ENCODE measurements at regions of chr17 and their contacts with region 1.

Region 1: DNA sequence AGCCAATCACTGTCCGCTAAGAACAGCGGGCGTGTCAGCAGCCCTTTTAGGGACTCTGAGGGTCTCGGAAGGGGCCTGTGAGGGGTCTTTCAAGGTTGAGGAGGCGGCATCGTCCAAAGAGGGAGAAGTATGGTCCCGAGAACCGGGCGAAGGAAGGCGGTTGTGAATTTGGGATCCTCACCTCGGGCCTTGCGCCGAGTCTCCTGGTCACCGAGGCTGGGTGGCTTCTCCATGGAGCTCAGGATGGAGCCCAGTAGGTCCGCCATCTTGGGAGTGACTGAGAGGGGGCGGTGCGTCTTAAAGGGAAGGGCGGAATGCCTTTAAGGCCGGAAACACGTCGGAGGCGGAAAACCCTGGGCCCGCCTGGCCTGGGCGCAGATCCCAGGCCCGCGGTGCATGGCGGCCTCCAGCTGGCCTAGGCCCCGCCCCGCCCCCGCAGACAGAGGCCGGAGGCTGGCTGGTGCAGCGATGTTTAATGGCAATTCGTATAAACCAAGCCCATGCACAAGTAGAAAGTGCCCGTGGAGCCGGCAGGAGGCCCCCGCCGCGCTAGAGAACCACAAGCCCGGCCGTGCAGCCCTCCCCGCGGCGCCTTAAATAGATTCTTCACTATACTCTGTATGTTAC is at the start of gene SPAG7:
- DNase-seq: peak; percentile 88 to 98 (median 93)
- ATAC-seq: peak; percentile 71
- H3K4me3 ChIP-seq: peak within 1 kb of the TSS; percentile 84
- H3K4me3 Mint-ChIP-seq: no peak within 1 kb of the TSS
- H3K27ac ChIP-seq: peak within 1 kb of the TSS; percentile 87
- H3K27ac Mint-ChIP-seq: peak within 1 kb of the TSS; percentile 69
- H3K4me1 ChIP-seq: peaks cover 38% of the 10 kb centered on the region
- H3K4me1 Mint-ChIP-seq: peaks cover 13% of the 10 kb centered on the region
- H3K27me3 ChIP-seq: no peaks in the 10 kb centered on the region
- H3K27me3 Mint-ChIP-seq: no peaks in the 10 kb centered on the region
- CTCF ChIP-seq: peak; percentile 15
- total RNA-seq, gene SPAG7: 30.2 to 30.9 TPM

Region 2: GRCh38 chr17:4366327-4367063 is 601.2 kb before region 1 on chr17 and contains the start of gene UBE2G1:
- CTCF ChIA-PET with region 1: no interaction called
- POLR2A ChIA-PET with region 1: no interaction called
- intact Hi-C with region 1: loop called in 1 of 2 experiments (anchors 10 kb)
- DNase-seq: peak; percentile 97 to 100 (median 99)
- ATAC-seq: peak; percentile 82
- H3K4me3 ChIP-seq: peak within 1 kb of the TSS; percentile 54
- H3K4me3 Mint-ChIP-seq: peak within 1 kb of the TSS; percentile 90
- H3K27ac ChIP-seq: peak within 1 kb of the TSS; percentile 68 to 91
- H3K27ac Mint-ChIP-seq: peak within 1 kb of the TSS; percentile 89
- H3K4me1 ChIP-seq: peaks cover 41% of the 10 kb centered on the region
- H3K4me1 Mint-ChIP-seq: peaks cover 31% of the 10 kb centered on the region
- H3K27me3 ChIP-seq: no peaks in the 10 kb centered on the region
- H3K27me3 Mint-ChIP-seq: no peaks in the 10 kb centered on the region
- CTCF ChIP-seq: no peak
- total RNA-seq, gene UBE2G1: 58.5 to 58.8 TPM

Region 3: DNA sequence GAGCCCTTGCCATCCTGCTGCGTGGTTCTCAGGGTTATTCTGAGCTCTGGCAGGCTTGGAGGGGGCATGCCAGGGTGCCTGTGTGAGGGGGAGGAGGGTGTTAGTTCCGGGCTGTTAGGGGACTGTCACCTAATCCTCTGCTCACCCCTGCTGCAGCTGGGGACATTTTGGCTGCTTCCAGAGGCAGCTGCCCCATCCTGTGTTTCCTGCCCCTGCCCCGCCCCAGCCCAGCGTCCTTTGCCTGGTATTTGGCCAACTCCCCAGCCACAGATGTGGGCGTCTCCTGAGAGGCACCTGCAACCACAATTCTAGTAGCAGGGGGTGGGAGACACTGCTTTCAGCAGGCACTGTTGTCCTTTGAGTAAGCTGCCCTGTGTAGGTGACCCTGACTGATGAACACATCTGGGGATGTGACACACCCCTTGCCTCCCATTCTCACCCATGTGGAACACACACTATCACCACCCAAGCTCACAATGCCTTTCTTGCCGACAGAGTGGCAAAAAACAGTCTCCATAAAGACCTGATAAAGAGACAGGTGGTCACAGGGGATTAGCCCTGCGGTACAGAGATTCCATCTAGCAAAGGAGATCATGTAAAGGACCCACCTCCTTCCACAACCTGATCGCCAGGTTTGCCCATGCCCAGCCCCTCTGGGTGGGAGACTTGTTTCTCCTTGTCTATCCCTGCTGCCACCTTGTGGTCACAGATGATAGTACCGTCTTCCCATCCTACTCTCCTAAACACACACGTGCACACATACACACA is 64.4 kb before region 1 on chr17 and contains the start of gene CHRNE:
- CTCF ChIA-PET with region 1: interaction called, 7 read pairs
- POLR2A ChIA-PET with region 1: interaction called, 54 read pairs
- intact Hi-C with region 1: loop called in 1 of 2 experiments (anchors 1 kb)
- DNase-seq: peak; percentile 55 to 91 (median 70)
- ATAC-seq: peak; percentile 33
- H3K4me3 ChIP-seq: no peak within 1 kb of the TSS
- H3K4me3 Mint-ChIP-seq: peak within 1 kb of the TSS; percentile 76
- H3K27ac ChIP-seq: no peak within 1 kb of the TSS
- H3K27ac Mint-ChIP-seq: peak within 1 kb of the TSS; percentile 94
- H3K4me1 ChIP-seq: peaks cover 54% of the 10 kb centered on the region
- H3K4me1 Mint-ChIP-seq: peaks cover 35% of the 10 kb centered on the region
- H3K27me3 ChIP-seq: no peaks in the 10 kb centered on the region
- H3K27me3 Mint-ChIP-seq: peaks cover 10% of the 10 kb centered on the region
- CTCF ChIP-seq: peak; percentile 89
- total RNA-seq, gene CHRNE: 3.2 to 3.7 TPM

Region 4: GRCh38 chr17:4934173-4934979 is 33.3 kb before region 1 on chr17:
- CTCF ChIA-PET with region 1: interaction called, 14 read pairs
- POLR2A ChIA-PET with region 1: interaction called, 195 read pairs
- intact Hi-C with region 1: no loop called
- DNase-seq: peak in 3 of 14 experiments; percentile 20 to 57 (median 30)
- ATAC-seq: no peak
- H3K4me3 ChIP-seq: no peak overlapping the region
- H3K4me3 Mint-ChIP-seq: no peak overlapping the region
- H3K27ac ChIP-seq: no peak overlapping the region
- H3K27ac Mint-ChIP-seq: peak overlapping the region; percentile 46
- H3K4me1 ChIP-seq: peaks cover 33% of the 10 kb centered on the region
- H3K4me1 Mint-ChIP-seq: peaks cover 29% of the 10 kb centered on the region
- H3K27me3 ChIP-seq: no peaks in the 10 kb centered on the region
- H3K27me3 Mint-ChIP-seq: no peaks in the 10 kb centered on the region
- CTCF ChIP-seq: no peak

Region 5: DNA sequence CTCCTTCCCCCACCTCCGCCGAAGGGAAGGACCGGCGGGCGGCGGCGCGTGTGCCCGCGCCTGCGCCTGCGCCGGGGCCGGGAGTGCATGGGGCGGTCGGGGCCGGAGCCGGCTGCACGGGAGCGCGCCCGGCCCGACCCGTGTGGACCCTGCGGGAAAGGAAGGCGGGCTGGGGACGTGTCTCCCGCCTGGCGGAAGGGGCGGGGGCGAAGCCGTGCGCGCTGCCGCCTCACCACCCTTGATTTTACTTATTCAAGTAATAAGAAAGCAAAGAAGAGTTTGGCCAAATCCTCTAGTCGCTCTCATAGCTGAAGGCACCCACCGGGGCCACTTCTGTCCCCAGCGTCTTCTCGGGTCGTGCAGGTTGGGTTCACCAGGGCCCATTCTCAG is 18.7 kb before region 1 on chr17:
- CTCF ChIA-PET with region 1: interaction called, 7 read pairs
- POLR2A ChIA-PET with region 1: interaction called, 350 read pairs
- intact Hi-C with region 1: loop called (anchors 1 kb)
- DNase-seq: peak in 13 of 14 experiments; percentile 36 to 89 (median 66)
- ATAC-seq: peak; percentile 32
- H3K4me3 ChIP-seq: peak overlapping the region; percentile 99
- H3K4me3 Mint-ChIP-seq: peak overlapping the region; percentile 99
- H3K27ac ChIP-seq: peak overlapping the region; percentile 84 to 98
- H3K27ac Mint-ChIP-seq: peak overlapping the region; percentile 90
- H3K4me1 ChIP-seq: peaks cover 45% of the 10 kb centered on the region
- H3K4me1 Mint-ChIP-seq: peaks cover 51% of the 10 kb centered on the region
- H3K27me3 ChIP-seq: no peaks in the 10 kb centered on the region
- H3K27me3 Mint-ChIP-seq: no peaks in the 10 kb centered on the region
- CTCF ChIP-seq: no peak

Region 6: GRCh38 chr17:4980644-4981216 is 13.1 kb after region 1 on chr17:
- CTCF ChIA-PET with region 1: interaction called, 3 read pairs
- POLR2A ChIA-PET with region 1: interaction called, 50 read pairs
- intact Hi-C with region 1: no loop called
- DNase-seq: peak in 8 of 14 experiments; percentile 21 to 83 (median 56)
- ATAC-seq: peak; percentile 96
- H3K4me3 ChIP-seq: no peak overlapping the region
- H3K4me3 Mint-ChIP-seq: peak overlapping the region; percentile 47
- H3K27ac ChIP-seq: no peak overlapping the region
- H3K27ac Mint-ChIP-seq: peak overlapping the region; percentile 16
- H3K4me1 ChIP-seq: peaks cover 24% of the 10 kb centered on the region
- H3K4me1 Mint-ChIP-seq: peaks cover 20% of the 10 kb centered on the region
- H3K27me3 ChIP-seq: no peaks in the 10 kb centered on the region
- H3K27me3 Mint-ChIP-seq: no peaks in the 10 kb centered on the region
- CTCF ChIP-seq: peak; percentile 80

Region 7: DNA sequence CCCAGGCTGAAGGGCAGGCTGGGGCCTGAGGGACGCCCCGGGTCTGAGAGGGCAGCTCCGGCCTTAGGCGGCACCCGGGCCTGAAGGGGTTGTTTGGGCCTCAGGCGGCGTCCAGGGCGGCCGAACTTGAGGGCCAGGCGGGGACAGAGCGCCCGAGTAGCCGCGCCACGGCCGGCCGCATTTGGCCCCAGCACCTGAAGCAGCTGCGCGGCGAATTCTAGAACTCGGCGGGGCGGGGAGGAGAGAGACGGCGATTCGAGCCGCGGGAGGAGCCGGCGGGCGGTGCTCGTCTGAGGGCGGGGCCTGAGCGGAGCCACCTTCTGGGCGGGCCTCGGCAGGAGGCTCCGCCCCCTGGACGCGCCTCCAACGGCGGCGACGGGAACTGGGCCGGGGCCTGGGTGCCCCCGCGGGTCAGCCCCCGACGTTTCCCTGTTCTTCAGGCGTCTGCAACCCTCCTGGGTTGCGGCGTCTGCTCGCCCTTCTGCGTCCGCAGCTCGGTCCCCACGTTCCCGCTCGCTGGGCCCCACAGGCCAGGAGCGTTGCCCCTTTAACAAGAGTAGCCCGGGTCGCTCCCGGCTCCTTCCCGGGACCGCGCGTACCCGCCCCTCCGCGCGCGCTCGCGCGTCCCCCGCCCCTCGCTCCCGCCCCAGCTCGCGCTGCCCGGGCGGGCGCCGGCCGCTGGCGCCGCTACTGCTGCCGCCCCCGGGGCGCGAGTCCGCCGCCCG is 29.8 kb after region 1 on chr17 and contains the starts of genes INCA1 and KIF1C:
- CTCF ChIA-PET with region 1: interaction called, 3 read pairs
- POLR2A ChIA-PET with region 1: interaction called, 39 read pairs
- intact Hi-C with region 1: loop called in 1 of 2 experiments (anchors 1 kb)
- DNase-seq: peak; percentile 83 to 96 (median 89)
- ATAC-seq: peak; percentile 98
- H3K4me3 ChIP-seq: peak within 1 kb of the TSS; percentile 62
- H3K4me3 Mint-ChIP-seq: peak within 1 kb of the TSS; percentile 85
- H3K27ac ChIP-seq: peak within 1 kb of the TSS; percentile 22 to 69
- H3K27ac Mint-ChIP-seq: peak within 1 kb of the TSS; percentile 81
- H3K4me1 ChIP-seq: peaks cover 24% of the 10 kb centered on the region
- H3K4me1 Mint-ChIP-seq: peaks cover 25% of the 10 kb centered on the region
- H3K27me3 ChIP-seq: no peaks in the 10 kb centered on the region
- H3K27me3 Mint-ChIP-seq: no peaks in the 10 kb centered on the region
- CTCF ChIP-seq: no peak
- total RNA-seq, gene INCA1: 0.19 TPM in 1 of 2 experiments, not detected in the other
- total RNA-seq, gene KIF1C: 10.2 to 12.2 TPM

Measured in CD4-positive, alpha-beta T cell (primary cell).